A673 (cell line): ENCODE measurements at regions of chr3 and their contacts with region 1.

Region 1: DNA sequence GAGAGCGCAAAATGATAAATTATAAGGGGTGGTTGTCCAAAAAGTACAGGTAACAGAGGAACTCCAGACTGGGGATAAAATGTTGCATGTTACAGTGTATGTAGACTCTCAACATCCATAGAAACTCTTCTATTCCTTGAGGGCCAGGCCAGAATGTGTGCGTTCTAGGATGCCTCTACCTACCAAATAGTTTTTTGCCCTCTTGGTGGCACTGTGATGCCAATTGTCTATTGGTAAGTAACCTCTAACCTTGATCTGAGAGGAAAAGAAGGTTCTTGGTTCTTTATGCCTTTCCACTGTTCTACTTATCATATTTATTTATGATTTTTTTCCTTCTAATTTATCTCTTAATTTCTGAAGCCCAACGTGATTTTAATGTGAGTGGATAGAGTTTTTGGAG is 424.6 kb downstream of the GRM7 start:
- DNase-seq: peak; percentile 47
- H3K4me3 ChIP-seq: no peak overlapping the region
- H3K27ac ChIP-seq: no peak overlapping the region
- H3K4me1 ChIP-seq: no peaks in the 10 kb centered on the region
- H3K27me3 ChIP-seq: no peaks in the 10 kb centered on the region
- CTCF ChIP-seq: peak; percentile 52

Region 2: DNA sequence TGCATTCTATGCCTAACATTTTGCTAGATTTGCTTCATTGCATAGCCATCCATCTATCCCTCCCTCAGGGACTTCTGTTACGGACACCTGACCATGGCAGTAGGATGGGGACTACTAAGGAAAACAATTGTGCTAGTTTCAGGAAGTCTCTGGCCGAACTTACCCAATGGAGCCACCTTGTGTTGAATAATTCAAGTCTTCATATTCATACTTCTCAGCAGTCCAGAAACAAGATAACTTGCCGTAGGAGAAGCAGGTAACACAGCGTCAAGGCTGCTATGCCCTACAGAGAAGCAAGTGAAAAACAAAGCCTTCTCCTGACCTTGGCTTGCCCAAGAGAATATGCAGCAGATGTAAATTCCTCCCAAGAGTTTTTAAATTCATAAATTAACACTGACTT is 260.7 kb after region 1 on chr3:
- CTCF ChIA-PET with region 1: no interaction called
- POLR2A ChIA-PET with region 1: no interaction called
- intact Hi-C with region 1: loop called (anchors 10 kb)
- DNase-seq: peak; percentile 37
- H3K4me3 ChIP-seq: no peak overlapping the region
- H3K27ac ChIP-seq: no peak overlapping the region
- H3K4me1 ChIP-seq: no peaks in the 10 kb centered on the region
- H3K27me3 ChIP-seq: no peaks in the 10 kb centered on the region
- CTCF ChIP-seq: peak; percentile 39